Ascending aorta (tissue), 2 donors: ENCODE measurements at regions of chr5 and their contacts with region 1.

Region 1: DNA sequence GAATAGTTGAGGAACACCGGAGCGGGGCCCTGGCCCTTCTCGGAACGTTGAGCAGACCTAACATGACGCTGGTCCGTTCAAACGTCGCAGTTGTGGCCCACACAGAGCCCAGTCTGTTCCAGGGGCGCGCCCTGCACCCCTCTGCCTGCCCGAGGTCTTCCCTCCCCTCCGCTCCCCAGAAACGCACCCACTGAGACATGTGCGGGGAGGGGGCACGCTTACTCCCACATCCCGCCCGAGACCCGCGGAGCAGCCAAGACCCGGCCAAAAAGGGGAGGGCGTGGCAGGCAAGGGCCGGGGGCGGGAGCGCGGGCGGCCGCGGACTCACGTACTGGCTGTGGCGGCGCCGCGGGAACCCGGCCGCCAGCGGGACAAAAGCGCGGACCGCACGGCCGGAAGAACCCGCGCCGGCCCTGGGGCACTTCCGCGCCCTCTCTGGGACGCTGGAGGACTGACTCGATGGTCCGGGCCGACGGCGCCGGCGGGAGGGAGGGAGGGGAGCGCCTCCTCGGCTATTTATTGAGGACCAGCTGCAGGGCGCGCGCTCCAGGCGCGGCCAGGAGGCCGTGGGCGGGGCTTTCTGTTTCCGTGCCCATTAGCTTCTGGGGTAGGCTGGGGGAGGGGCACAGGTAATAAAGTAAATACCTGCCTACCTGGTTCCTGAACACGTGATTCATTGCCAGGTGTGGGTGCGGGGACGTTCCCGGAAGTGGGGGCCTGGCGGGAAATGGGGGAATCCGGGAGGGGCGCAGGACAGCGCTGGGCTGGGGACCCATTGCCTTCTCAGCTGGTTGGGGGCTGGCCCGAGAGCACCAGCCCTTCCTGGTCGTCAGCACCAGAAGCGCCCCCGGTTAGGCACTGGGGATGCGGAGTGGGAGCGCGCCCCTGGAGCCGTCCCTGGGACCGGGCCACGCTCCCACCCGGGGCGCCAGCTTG is at the start of gene ZFP62:
- DNase-seq: peak; percentile 59 to 95
- H3K4me3 ChIP-seq: peak within 1 kb of the TSS; percentile 82 to 83
- H3K27ac ChIP-seq: peak within 1 kb of the TSS; percentile 69 to 80
- H3K4me1 ChIP-seq: peaks cover 0 to 3% of the 10 kb centered on the region in 2 donors
- H3K27me3 ChIP-seq: no peaks in the 10 kb centered on the region
- CTCF ChIP-seq: peak in 1 of 3 experiments; percentile 9
- total RNA-seq, gene ZFP62: 1.8 TPM

Region 2: GRCh38 chr5:180802325-180803180 is 58.6 kb before region 1 on chr5 and contains the start of gene MGAT1:
- intact Hi-C with region 1: loop called (anchors 2 kb)
- DNase-seq: peak; percentile 59 to 93
- H3K4me3 ChIP-seq: peak within 1 kb of the TSS; percentile 85 to 91
- H3K27ac ChIP-seq: peak within 1 kb of the TSS; percentile 93 to 99
- H3K4me1 ChIP-seq: peaks cover 32 to 72% of the 10 kb centered on the region in 2 donors
- H3K27me3 ChIP-seq: no peaks in the 10 kb centered on the region
- CTCF ChIP-seq: no peak
- total RNA-seq, gene MGAT1: 257 TPM

Region 3: GRCh38 chr5:180831139-180832048 is 29.8 kb before region 1 on chr5:
- intact Hi-C with region 1: loop called (anchors 1 kb)
- DNase-seq: peak; percentile 55 to 89
- H3K4me3 ChIP-seq: peak overlapping the region; percentile 92 to 95
- H3K27ac ChIP-seq: peak overlapping the region; percentile 97
- H3K4me1 ChIP-seq: peaks cover 4 to 18% of the 10 kb centered on the region in 2 donors
- H3K27me3 ChIP-seq: no peaks in the 10 kb centered on the region
- CTCF ChIP-seq: peak in 2 of 3 experiments; percentile 7 to 9